Common myeloid progenitor, CD34-positive (primary cell): ENCODE measurements at regions of chr11 and their contacts with region 1.

Region 1: GRCh38 chr11:66842896-66843775 is at the start of gene RCE1:
- DNase-seq: peak; percentile 92 to 96 (median 94)
- H3K4me3 ChIP-seq: peak within 1 kb of the TSS; percentile 55 to 98 (median 97)
- H3K27ac ChIP-seq: peak within 1 kb of the TSS; percentile 83 to 95
- H3K4me1 ChIP-seq: peaks cover 11 to 38% (median 31%) of the 10 kb centered on the region in 4 experiments
- H3K27me3 ChIP-seq: no peaks in the 10 kb centered on the region

Region 2: GRCh38 chr11:66694732-66695207 is 148.4 kb before region 1 on chr11:
- CTCF ChIA-PET with region 1: interaction called, 152 read pairs
- POLR2A ChIA-PET with region 1: no interaction called
- DNase-seq: peak; percentile 83 to 93 (median 90)
- H3K4me3 ChIP-seq: no peak overlapping the region
- H3K27ac ChIP-seq: no peak overlapping the region
- H3K4me1 ChIP-seq: peaks cover 0 to 4% (median 2%) of the 10 kb centered on the region in 4 experiments
- H3K27me3 ChIP-seq: no peaks in the 10 kb centered on the region

Region 3: DNA sequence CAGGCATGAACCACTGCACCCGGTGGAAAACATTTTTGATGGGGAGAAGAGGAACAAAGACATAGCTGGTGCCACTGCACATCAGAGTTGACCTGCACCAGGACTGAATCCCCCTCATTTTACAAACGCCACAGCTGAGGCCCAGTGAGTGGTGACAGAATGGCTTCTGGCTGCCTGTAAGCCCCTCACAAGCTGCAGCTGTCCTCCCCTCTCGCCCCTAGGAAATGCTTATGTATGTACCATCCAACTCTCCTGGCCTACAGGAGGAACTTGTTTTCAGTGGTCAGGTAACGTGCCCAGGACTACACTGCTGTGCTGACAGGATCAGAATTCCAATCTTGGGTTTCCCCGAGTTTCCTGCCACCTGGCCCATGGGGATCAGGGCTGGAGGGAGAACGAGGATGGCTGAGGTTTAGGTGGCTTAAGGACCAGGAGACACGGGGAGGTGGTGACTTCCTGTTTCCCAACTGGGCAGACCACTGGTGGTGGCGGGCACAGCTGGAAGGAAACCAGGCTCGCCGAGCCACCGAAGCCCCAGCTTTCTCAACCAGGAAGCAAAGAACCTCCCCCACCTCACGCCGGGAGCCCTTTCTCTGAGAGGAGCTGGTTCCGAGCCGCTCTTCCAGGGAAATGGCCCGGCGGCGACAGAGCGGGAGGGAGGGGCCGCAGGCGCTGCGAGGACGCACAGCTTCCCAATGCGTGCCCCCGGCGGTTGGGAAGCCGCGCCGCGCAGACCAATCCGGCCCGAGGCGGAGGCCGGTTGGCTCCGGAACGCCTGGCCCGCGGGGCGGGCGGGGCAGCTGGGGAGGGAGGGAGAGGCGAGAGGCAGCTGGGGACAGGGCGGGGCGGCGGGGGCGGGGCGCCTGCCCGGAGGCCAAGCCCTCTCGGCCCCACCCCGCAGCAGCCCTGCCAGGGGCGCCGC is 12.7 kb after region 1 on chr11:
- CTCF ChIA-PET with region 1: interaction called, 14 read pairs
- POLR2A ChIA-PET with region 1: interaction called, 12 read pairs
- DNase-seq: peak; percentile 80 to 84 (median 82)
- H3K4me3 ChIP-seq: peak overlapping the region; percentile 50 to 86 (median 71)
- H3K27ac ChIP-seq: peak overlapping the region; percentile 50 to 79
- H3K4me1 ChIP-seq: peaks cover 0 to 33% (median 25%) of the 10 kb centered on the region in 4 experiments
- H3K27me3 ChIP-seq: no peaks in the 10 kb centered on the region

Region 4: DNA sequence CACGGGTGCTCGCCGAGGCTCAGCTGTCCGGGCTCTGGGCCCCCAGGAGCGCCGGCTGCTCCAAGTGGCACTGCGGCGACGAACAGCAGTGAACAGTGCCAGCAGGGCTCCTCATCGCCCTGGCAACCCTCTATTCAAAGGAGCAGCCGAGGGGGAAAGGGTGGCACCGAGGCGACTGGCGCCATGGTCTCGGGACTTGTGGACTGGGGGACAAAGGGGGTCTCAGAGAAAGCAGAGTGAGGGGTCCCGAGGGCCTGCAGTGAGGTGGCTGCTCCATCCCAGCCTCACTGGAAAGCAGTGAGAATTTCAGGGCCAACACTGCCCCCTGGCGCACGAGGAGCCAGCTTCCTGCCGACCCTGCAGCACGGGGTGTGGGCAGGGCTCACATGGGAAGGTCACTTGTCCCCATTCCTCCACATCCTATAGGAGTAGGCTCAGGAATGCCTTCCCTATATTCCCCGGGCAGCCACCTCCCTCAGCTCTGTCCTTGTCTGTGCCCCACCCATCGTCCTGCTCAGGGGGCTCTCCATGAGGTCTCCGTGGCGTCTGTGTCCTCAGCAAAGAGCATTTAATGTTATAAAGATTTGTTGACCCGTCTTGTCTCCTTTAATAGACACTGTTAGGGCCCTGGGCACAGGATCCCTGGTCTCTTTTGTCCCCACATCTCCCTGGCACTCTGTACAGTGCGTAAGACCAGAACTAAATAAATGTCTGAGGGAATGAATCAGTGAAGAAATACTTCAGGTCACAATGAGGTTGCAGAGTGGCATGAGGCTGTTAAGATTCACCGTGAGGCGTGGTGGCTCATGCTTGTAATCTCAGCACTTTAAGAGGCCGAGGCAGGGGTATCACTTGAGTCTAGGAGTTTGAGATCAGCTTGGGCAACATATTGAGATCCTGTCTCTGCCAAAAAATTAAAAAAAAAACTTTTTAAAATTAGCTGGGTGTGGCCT is 40.2 kb after region 1 on chr11:
- CTCF ChIA-PET with region 1: interaction called, 15 read pairs
- POLR2A ChIA-PET with region 1: interaction called, 3 read pairs
- DNase-seq: peak; percentile 39 to 63 (median 51)
- H3K4me3 ChIP-seq: no peak overlapping the region
- H3K27ac ChIP-seq: no peak overlapping the region
- H3K4me1 ChIP-seq: peaks cover 9 to 18% (median 17%) of the 10 kb centered on the region in 4 experiments
- H3K27me3 ChIP-seq: no peaks in the 10 kb centered on the region